ENCODE measurements at regions of chr13 and their contacts with region 1.

Region 1: GRCh38 chr13:45162821-45163220 is 38.0 kb downstream of the KCTD4 start:
- DNase-seq: peak in 1 of 2 experiments; percentile 95
- H3K4me3 ChIP-seq: peak overlapping the region; percentile 34; the same call in 1 of the 2 replicates
- H3K27ac ChIP-seq: peak overlapping the region; percentile 83
- H3K4me1 ChIP-seq: peaks cover 48% of the 10 kb centered on the region
- H3K27me3 ChIP-seq: no peaks in the 10 kb centered on the region
- CTCF ChIP-seq: no peak

Region 2: DNA sequence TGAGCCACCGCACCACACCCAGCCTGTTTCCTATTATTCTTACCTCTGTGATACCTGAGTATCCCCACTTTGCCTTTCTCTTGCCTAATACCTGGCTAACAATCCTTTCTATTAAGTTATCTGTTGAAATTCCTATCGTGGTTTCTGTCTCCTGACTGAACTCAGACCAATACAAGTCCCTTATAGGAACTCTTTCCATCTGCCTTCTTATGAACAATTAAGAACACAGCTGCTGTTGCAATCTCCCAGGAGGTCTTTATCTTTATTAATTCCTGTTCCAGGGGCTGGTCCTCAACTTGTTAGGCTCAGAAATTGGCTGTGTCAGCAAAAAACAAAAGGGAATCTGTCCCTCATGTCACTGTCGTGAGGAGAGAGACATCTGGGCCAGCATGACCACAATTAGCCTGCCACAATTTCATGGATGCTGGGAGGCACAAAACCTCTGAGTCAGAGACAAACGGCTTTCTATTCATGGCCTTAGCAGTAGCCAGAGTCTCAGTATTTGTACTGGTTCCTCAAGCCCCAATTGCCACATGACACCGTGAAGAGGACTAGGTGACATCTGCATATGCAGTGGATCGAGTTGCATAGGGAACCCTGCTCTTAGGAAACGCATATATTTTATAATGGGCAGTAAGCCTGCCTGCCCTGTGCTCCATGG is 231.7 kb before region 1 on chr13:
- CTCF ChIA-PET with region 1: no interaction called
- POLR2A ChIA-PET with region 1: interaction called, 12 read pairs
- intact Hi-C with region 1: no loop called
- DNase-seq: peak; percentile 14 to 77
- H3K4me3 ChIP-seq: no peak overlapping the region
- H3K27ac ChIP-seq: peak overlapping the region; percentile 65
- H3K4me1 ChIP-seq: peaks cover 53% of the 10 kb centered on the region
- H3K27me3 ChIP-seq: no peaks in the 10 kb centered on the region
- CTCF ChIP-seq: no peak

Region 3: DNA sequence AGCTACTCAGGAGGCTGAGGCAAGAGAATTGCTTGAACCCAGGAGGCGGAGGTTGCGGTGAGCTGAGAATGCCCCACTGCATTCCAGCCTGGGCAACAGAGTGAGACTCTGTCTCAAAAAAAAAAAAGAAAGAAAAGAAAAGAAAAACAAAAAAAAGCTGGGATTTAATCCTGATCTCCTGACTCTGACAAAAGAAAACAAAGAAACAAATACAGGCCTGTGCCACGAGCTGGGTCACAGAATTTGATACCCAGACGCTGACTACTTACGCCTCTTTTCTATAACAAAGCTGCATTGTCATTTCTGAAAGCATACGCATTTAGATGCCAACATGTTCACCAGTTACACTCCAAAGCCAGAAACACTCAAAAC is 60.7 kb before region 1 on chr13:
- CTCF ChIA-PET with region 1: no interaction called
- POLR2A ChIA-PET with region 1: no interaction called
- intact Hi-C with region 1: no loop called
- DNase-seq: no peak
- H3K4me3 ChIP-seq: no peak overlapping the region
- H3K27ac ChIP-seq: no peak overlapping the region
- H3K4me1 ChIP-seq: peaks cover 12% of the 10 kb centered on the region
- H3K27me3 ChIP-seq: no peaks in the 10 kb centered on the region
- CTCF ChIP-seq: no peak

Region 4: DNA sequence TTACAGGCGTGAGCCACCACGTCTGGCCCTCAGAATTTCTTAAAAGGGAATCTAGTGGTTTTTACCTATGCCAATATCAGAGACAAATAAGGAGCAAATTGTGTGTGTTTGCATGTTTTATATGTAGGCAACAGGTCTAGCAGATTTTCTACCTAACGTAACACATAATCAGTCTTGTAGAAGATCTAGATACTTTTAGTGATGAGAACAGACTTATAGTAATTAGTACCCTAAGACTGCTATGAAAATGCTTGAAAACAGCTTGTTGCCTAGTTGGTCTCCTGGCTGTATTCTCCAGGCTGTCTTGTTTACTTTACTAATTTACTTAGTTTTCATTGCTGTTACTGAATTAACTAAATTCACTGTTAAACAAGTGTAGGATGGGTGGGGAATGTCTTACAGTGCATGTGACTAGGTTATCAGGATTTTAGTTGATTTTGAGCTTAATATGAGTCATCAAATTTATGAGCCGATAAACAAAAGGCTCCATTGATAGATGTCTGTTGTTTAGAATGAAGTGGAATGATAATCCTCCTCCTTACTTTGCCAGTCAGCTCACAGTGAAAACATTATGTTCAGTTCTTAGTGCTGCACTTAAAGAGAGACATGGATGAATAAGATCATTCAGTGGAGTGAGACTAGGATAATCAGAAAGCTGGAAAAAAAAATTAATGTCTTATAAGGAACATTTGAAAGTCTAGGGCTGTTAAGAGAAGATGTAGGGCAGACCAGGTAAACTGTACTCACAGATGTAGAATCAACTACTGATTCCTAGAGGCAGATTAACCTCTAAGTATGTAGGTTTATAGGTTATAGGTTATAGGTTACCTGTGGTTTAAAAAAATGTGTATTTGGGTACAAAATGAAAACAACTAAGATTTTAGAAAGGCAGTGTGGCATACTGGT is 20.1 kb before region 1 on chr13:
- CTCF ChIA-PET with region 1: interaction called, 8 read pairs
- POLR2A ChIA-PET with region 1: interaction called, 12 read pairs
- intact Hi-C with region 1: no loop called
- DNase-seq: peak in 1 of 2 experiments; percentile 86
- H3K4me3 ChIP-seq: peak overlapping the region; percentile 30; the same call in 1 of the 2 replicates
- H3K27ac ChIP-seq: peak overlapping the region; percentile 85
- H3K4me1 ChIP-seq: peaks cover 47% of the 10 kb centered on the region
- H3K27me3 ChIP-seq: no peaks in the 10 kb centered on the region
- CTCF ChIP-seq: no peak

Region 5: GRCh38 chr13:45219938-45220375 is 57.1 kb after region 1 on chr13:
- CTCF ChIA-PET with region 1: interaction called, 7 read pairs
- POLR2A ChIA-PET with region 1: no interaction called
- intact Hi-C with region 1: loop called (anchors 2 kb)
- DNase-seq: peak; percentile 55 to 100
- H3K4me3 ChIP-seq: peak overlapping the region; percentile 20; the same call in 1 of the 2 replicates
- H3K27ac ChIP-seq: peak overlapping the region; percentile 82
- H3K4me1 ChIP-seq: peaks cover 36% of the 10 kb centered on the region
- H3K27me3 ChIP-seq: no peaks in the 10 kb centered on the region
- CTCF ChIP-seq: no peak

Region 6: GRCh38 chr13:45370922-45371406 is 208.1 kb after region 1 on chr13:
- CTCF ChIA-PET with region 1: no interaction called
- POLR2A ChIA-PET with region 1: no interaction called
- intact Hi-C with region 1: no loop called
- DNase-seq: peak in 1 of 2 experiments; percentile 43
- H3K4me3 ChIP-seq: no peak overlapping the region
- H3K27ac ChIP-seq: no peak overlapping the region
- H3K4me1 ChIP-seq: peaks cover 17% of the 10 kb centered on the region
- H3K27me3 ChIP-seq: no peaks in the 10 kb centered on the region
- CTCF ChIP-seq: peak; percentile 80

Measured in PC-9 (cell line).